Gastrocnemius medialis (tissue), 4 donors: ENCODE measurements at regions of chr3 and their contacts with region 1.

Region 1: DNA sequence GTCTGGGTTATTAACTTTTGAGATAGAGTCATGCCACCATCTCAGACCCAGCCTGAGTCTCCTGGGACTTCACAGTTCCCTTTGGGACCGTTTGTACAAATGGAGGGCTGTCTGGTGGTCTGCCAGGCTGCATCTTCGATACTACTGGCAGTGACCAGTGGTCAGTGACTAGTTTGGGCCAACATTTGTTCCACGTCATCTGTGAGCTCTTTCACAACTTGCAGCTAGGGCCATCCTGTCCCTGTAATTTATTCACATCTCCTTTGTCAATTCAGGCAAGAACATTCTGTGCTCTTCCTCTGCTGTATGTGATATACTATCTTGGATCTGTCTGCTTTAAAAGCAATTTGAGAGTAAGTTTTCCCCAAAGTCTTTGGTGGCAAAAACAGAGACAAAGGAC is 353.3 kb downstream of the EPHB1 start:
- DNase-seq: peak; percentile 75 to 83
- ATAC-seq: peak; percentile 96 to 97
- H3K4me3 ChIP-seq: no peak overlapping the region
- H3K27ac ChIP-seq: peak overlapping the region; percentile 81 to 88 (median 84)
- H3K4me1 ChIP-seq: peaks cover 18 to 30% of the 10 kb centered on the region in 2 donors
- H3K27me3 ChIP-seq: no peaks in the 10 kb centered on the region
- CTCF ChIP-seq: no peak
- POLR2A ChIP-seq: peak in 1 of 2 donors; percentile 8

Region 2: GRCh38 chr3:134640872-134641470 is 507.4 kb before region 1 on chr3:
- in situ Hi-C with region 1: no loop called
- intact Hi-C with region 1: loop called (anchors 10 kb)
- DNase-seq: no peak
- ATAC-seq: no peak
- H3K4me3 ChIP-seq: no peak overlapping the region
- H3K27ac ChIP-seq: no peak overlapping the region
- H3K4me1 ChIP-seq: peaks cover 19 to 28% of the 10 kb centered on the region in 2 donors
- H3K27me3 ChIP-seq: no peaks in the 10 kb centered on the region
- CTCF ChIP-seq: peak in 1 of 5 experiments; percentile 9
- POLR2A ChIP-seq: no peak

Region 3: DNA sequence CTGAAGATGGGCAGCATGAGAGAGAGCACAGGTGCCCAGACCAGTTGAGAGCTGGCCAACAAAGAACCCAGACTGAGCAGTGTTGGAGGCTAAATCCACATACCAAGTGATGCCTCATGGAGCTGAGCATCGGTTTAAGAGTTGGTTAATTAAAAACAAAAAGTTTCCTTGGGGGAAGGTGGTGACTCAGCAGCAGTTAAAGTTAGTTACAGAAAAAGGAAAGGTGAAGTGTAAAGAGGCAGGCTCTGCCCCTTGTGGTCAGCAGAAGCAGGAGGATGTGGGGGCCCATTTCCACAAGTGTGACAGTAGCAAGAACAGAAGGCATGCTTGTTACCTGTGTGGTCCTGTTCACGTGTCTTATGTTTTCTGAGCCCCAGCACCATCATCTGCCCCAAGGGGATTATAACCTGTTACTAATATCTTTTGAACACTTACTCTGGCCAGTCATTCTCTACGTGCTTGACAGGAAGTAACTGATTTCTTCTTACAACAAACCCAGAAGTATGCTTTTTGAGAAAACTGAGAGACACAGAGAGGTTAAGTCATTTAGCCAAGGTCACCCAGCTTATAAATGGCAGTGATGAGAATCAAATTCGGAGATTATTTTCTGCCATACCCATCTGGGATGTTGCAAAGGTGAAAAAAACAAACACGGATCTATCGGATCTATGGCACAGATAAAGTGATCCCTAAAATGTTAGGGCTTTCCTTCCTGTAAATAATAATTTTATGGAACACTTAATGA is 262.3 kb before region 1 on chr3:
- in situ Hi-C with region 1: no loop called
- intact Hi-C with region 1: no loop called
- DNase-seq: no peak
- ATAC-seq: no peak
- H3K4me3 ChIP-seq: no peak overlapping the region
- H3K27ac ChIP-seq: no peak overlapping the region
- H3K4me1 ChIP-seq: peaks cover 4 to 6% of the 10 kb centered on the region in 2 donors
- H3K27me3 ChIP-seq: no peaks in the 10 kb centered on the region
- CTCF ChIP-seq: no peak
- POLR2A ChIP-seq: no peak

Region 4: DNA sequence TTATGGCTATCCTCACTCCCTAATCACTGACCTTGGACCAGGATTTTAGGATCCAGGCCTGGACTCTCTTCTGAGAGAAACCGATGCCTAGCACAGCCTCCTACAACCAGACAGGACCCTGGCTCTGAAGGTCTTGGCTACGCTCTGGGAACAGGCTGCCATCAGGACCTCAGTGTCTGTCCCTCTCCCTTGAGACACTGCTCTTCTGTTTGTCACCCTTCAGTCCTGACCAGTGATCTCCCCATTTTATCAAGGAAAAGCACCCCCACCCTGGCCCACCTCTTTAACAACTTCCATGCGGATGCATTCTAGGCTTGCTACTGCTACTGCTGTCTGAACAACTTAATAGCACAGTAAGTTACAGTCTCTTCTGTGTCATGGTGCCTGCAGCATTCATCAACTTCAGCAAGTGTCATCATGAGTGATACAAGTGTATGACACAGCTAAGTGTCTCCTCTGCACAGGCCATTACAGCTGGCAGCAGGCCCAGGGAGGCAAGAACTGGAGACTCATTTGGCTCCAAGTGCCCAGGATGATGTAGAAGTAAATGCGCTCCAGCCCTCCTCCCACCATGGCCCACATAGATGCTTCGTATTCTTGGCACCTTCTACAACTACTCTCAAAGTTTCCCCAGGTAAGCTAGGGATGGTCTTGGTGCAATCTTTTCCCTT is 51.0 kb before region 1 on chr3:
- in situ Hi-C with region 1: no loop called
- intact Hi-C with region 1: no loop called
- DNase-seq: no peak
- ATAC-seq: no peak
- H3K4me3 ChIP-seq: no peak overlapping the region
- H3K27ac ChIP-seq: no peak overlapping the region
- H3K4me1 ChIP-seq: peaks cover 4 to 6% of the 10 kb centered on the region in 2 donors
- H3K27me3 ChIP-seq: no peaks in the 10 kb centered on the region
- CTCF ChIP-seq: no peak
- POLR2A ChIP-seq: no peak

Region 5: GRCh38 chr3:135136361-135137100 is 11.9 kb before region 1 on chr3:
- in situ Hi-C with region 1: no loop called
- intact Hi-C with region 1: loop called (anchors 1 kb)
- DNase-seq: peak; percentile 80
- ATAC-seq: peak; percentile 98
- H3K4me3 ChIP-seq: no peak overlapping the region
- H3K27ac ChIP-seq: peak overlapping the region; percentile 78 to 88 (median 82)
- H3K4me1 ChIP-seq: peaks cover 29 to 31% of the 10 kb centered on the region in 2 donors
- H3K27me3 ChIP-seq: no peaks in the 10 kb centered on the region
- CTCF ChIP-seq: no peak
- POLR2A ChIP-seq: no peak

Region 6: DNA sequence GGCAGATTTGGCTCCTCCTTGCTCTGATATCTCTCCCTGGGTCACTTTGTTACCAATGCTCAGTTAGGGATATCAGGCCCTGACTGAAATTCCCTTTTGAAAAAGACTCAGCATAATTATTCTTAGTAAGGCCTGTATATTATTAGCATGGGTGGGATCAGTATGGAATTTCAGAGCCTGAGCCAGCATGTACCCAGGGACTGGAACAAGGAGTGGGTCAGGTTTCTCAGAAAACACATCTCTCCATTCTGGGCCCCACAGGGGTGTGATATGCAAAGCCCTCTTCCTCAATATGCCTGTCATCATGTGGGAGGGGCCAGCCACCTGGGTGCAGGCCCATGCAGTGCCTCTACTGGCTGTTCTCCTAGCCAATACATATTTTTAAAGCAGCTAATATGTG is 69.9 kb after region 1 on chr3:
- in situ Hi-C with region 1: no loop called
- intact Hi-C with region 1: loop called (anchors 2 kb)
- DNase-seq: peak; percentile 86 to 91
- ATAC-seq: peak; percentile 89 to 92
- H3K4me3 ChIP-seq: no peak overlapping the region
- H3K27ac ChIP-seq: peak overlapping the region; percentile 84 to 95 (median 90)
- H3K4me1 ChIP-seq: peaks cover 35 to 43% of the 10 kb centered on the region in 2 donors
- H3K27me3 ChIP-seq: no peaks in the 10 kb centered on the region
- CTCF ChIP-seq: peak in 2 of 5 experiments; percentile 29 to 40
- POLR2A ChIP-seq: peak in 1 of 2 donors; percentile 42

Region 7: DNA sequence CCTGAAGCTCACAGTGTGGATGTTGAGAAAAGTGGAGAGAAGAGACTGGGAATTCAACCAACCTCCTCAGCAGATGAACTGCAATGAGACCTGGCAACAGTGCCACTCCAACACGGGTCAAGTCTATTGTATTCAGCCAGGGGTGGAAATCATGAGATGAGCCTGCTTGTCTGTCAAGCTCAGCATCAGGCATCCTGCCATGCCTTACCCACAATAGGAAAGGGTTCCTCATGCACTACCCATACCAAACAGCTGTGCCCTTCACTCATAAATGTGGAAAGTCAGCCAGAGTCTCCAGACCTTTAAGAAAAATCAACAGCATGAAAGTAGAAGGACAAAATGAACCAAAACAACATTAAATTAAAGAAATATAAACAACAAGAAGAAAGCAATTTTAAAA is 188.8 kb after region 1 on chr3:
- in situ Hi-C with region 1: no loop called
- intact Hi-C with region 1: loop called (anchors 10 kb)
- DNase-seq: peak; percentile 17 to 82
- ATAC-seq: peak; percentile 80 to 100
- H3K4me3 ChIP-seq: no peak overlapping the region
- H3K27ac ChIP-seq: peak overlapping the region in 1 of 4 donors; percentile 41
- H3K4me1 ChIP-seq: peaks cover 3 to 9% of the 10 kb centered on the region in 2 donors
- H3K27me3 ChIP-seq: no peaks in the 10 kb centered on the region
- CTCF ChIP-seq: no peak
- POLR2A ChIP-seq: no peak